ENCODE measurements at regions of chr5 and their contacts with region 1.

Region 1: GRCh38 chr5:52948418-52949076 is 40.6 kb upstream of the ITGA2 start:
- DNase-seq: peak; percentile 53
- H3K4me3 Mint-ChIP-seq: no peak overlapping the region
- H3K27ac Mint-ChIP-seq: no peak overlapping the region
- H3K4me1 Mint-ChIP-seq: peaks cover 23% of the 10 kb centered on the region
- H3K27me3 Mint-ChIP-seq: peaks cover 20% of the 10 kb centered on the region

Region 2: GRCh38 chr5:52977264-52977897 is 28.8 kb after region 1 on chr5:
- intact Hi-C with region 1: no loop called
- DNase-seq: no peak
- H3K4me3 Mint-ChIP-seq: no peak overlapping the region
- H3K27ac Mint-ChIP-seq: no peak overlapping the region
- H3K4me1 Mint-ChIP-seq: peaks cover 3% of the 10 kb centered on the region
- H3K27me3 Mint-ChIP-seq: peaks cover 42% of the 10 kb centered on the region

Region 3: DNA sequence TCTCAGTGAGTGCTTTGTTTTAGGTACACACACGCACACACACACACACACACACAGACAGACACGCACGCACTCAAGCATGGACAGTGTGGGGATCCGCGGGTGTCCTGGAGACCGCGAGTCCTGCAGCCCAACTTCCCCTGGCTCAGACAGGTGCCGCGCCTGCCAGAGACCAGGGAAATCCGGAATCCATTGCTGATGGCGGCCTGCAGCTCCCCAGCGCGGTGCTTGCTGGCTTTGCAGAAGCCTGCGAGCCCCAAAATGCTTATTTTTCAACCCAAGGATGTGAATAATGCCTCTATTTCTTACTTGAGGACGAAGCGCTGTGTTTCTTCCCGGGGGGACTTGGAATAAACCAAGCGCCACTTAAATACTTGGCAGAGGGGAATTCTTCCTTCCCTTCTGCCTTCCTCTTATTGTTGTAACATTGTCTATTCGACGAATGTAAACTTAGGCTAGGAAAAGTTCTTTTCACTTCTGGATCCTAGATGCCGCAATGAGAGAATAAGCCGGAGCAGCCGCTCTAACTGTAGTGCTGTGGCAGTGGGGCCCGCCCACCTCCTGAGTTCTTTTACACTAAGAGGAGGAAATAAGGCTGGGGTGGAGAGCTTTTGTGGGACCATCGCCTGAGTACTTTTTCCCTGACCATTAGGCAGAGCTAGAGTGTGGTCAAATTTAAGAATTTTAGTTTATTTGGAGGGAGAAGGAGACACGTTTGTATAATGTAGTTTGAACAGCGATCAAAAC is 41.4 kb after region 1 on chr5:
- intact Hi-C with region 1: loop called (anchors 2 kb)
- DNase-seq: peak; percentile 26
- H3K4me3 Mint-ChIP-seq: peak overlapping the region; percentile 75
- H3K27ac Mint-ChIP-seq: no peak overlapping the region
- H3K4me1 Mint-ChIP-seq: peaks cover 29% of the 10 kb centered on the region
- H3K27me3 Mint-ChIP-seq: peaks cover 40% of the 10 kb centered on the region

Region 4: DNA sequence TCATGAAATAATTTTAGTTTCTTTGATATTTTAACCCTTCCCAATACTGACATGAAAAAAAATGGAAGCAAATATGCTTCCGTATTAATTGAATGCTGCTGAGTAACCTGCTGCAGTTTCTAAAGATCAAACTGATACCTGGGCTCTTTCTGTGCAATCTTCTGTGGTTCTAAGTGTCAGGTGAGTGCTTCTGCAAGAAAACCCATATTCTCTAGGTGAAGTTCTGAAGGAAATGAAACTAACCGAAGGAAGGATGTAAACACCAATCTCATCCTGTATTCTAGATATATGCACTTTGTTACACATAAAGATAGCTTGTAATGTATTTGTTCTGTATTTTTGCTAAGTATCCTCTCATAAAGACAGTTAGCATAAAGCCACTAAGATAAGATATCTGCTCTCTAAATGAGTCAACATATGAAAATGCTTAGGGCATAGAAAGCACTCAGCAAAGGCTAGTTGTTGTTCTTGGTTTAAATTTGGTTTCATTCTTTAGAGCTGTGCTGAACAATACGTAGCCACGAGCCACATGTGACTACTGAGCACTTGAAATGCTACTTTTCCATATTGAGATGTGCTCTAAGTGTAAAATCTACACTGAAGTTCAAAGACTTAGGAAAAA is 92.6 kb after region 1 on chr5:
- intact Hi-C with region 1: loop called (anchors 5 kb)
- DNase-seq: peak; percentile 36
- H3K4me3 Mint-ChIP-seq: peak overlapping the region; percentile 15
- H3K27ac Mint-ChIP-seq: peak overlapping the region; percentile 24
- H3K4me1 Mint-ChIP-seq: peaks cover 73% of the 10 kb centered on the region
- H3K27me3 Mint-ChIP-seq: no peaks in the 10 kb centered on the region

Region 5: DNA sequence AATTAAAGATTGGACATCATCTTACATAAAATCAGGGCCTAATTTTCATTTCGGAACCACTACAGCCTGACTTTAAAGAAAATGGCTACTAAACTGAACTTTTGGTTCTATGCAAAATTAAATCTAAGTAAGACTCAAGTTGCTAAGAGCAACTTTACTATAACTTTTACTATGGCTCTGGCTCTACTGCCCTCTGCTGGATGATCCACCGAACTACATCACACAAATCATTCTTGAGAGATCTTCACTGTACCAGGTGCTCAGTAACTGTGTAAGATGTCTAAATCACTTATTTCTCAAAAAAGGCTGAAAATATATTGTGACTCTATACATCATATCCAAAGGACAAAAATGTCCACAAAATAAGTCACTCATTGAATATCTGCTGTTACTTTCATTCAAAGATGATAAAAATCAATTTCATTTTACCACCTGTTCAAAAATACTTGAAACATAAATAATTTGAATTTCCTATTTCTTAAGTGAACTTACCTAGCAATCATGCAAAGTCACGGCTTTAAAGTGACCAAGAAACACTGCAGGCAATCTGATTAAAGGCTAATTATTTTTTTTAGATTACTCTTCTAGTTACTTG is 147.5 kb after region 1 on chr5:
- intact Hi-C with region 1: loop called (anchors 1 kb)
- DNase-seq: peak; percentile 62
- H3K4me3 Mint-ChIP-seq: no peak overlapping the region
- H3K27ac Mint-ChIP-seq: no peak overlapping the region
- H3K4me1 Mint-ChIP-seq: peaks cover 19% of the 10 kb centered on the region
- H3K27me3 Mint-ChIP-seq: peaks cover 2% of the 10 kb centered on the region